GM12878 (cell line): ENCODE measurements at regions of chr11 and their contacts with region 1.

Region 1: GRCh38 chr11:57530596-57531507 is at the start of gene TIMM10:
- DNase-seq: peak; percentile 95
- ATAC-seq: peak; percentile 97
- H3K4me3 ChIP-seq: peak within 1 kb of the TSS; percentile 85
- H3K27ac ChIP-seq: peak within 1 kb of the TSS; percentile 88
- H3K4me1 ChIP-seq: peaks cover 16% of the 10 kb centered on the region
- H3K27me3 ChIP-seq: no peaks in the 10 kb centered on the region
- CTCF ChIP-seq: no peak
- EP300 ChIP-seq: peak; percentile 21 to 35; a peak in 2 of 4 replicates
- POLR2A ChIP-seq: peak; percentile 79
- RAD21 ChIP-seq: no peak
- polyA plus RNA-seq, gene TIMM10: 770 to 898 TPM

Region 2: DNA sequence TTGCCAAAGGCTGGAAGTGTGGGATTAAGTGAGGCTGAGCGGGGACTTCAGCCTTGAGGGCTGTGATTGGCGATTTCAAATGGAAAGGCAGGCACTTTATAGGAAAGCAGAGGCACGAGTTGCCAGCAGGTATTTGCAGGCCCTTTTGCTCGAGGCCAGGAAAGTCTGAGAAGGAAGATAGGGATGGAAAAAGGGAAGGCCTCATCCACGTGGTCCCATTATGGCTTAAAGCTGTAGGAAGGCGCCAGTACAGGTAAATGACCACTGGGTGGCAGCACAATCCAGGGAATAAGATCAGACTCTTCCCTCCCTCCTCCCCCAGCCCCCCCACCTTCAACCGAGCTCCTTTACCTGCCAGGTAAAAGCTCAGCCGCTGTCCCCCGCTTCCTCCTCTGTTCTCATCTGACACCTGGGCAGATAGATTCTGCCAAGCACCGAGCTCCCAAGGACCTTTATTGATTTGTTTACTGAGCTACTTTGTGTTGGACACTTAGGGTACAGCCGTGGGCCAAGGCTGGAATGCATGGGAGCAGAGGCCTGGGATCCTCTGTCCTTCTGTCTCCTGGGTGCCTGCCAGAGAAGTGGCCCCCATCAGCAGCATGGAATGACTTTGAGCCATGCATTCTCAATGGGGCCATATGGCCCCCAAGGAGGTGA is 185.2 kb before region 1 on chr11:
- CTCF ChIA-PET with region 1: interaction called, 22 read pairs
- POLR2A ChIA-PET with region 1: no interaction called
- RAD21 ChIA-PET with region 1: interaction called, 9 read pairs
- SMC1A ChIA-PET with region 1: interaction called, 9 read pairs
- in situ Hi-C with region 1: loop called (anchors 5 kb)
- intact Hi-C with region 1: loop called (anchors 1 kb)
- DNase-seq: no peak
- ATAC-seq: peak; percentile 83
- H3K4me3 ChIP-seq: no peak overlapping the region
- H3K27ac ChIP-seq: no peak overlapping the region
- H3K4me1 ChIP-seq: no peaks in the 10 kb centered on the region; the same call in 1 of the 2 replicates
- H3K27me3 ChIP-seq: peaks cover 0 to 4% of the 10 kb centered on the region in 2 experiments; a peak in 1 of 4 replicates
- CTCF ChIP-seq: peak; percentile 66 to 77 (median 75); a peak in 5 of 6 replicates
- EP300 ChIP-seq: no peak
- POLR2A ChIP-seq: no peak
- RAD21 ChIP-seq: peak; percentile 76

Region 3: GRCh38 chr11:57474017-57474802 is 56.6 kb before region 1 on chr11:
- CTCF ChIA-PET with region 1: interaction called, 112 read pairs
- POLR2A ChIA-PET with region 1: no interaction called
- RAD21 ChIA-PET with region 1: interaction called, 5 read pairs
- SMC1A ChIA-PET with region 1: no interaction called
- in situ Hi-C with region 1: no loop called
- intact Hi-C with region 1: no loop called
- DNase-seq: peak; percentile 53
- ATAC-seq: peak; percentile 54
- H3K4me3 ChIP-seq: no peak overlapping the region
- H3K27ac ChIP-seq: 0 out of 2 replicates have a peak overlapping the region, but pooled peaks have one; percentile 35
- H3K4me1 ChIP-seq: peaks cover 24% of the 10 kb centered on the region
- H3K27me3 ChIP-seq: no peaks in the 10 kb centered on the region
- CTCF ChIP-seq: no peak
- EP300 ChIP-seq: no peak
- POLR2A ChIP-seq: no peak
- RAD21 ChIP-seq: no peak

Region 4: GRCh38 chr11:57508341-57509170 is 22.3 kb before region 1 on chr11:
- CTCF ChIA-PET with region 1: interaction called, 129 read pairs
- POLR2A ChIA-PET with region 1: no interaction called
- RAD21 ChIA-PET with region 1: interaction called, 7 read pairs
- SMC1A ChIA-PET with region 1: interaction called, 6 read pairs
- in situ Hi-C with region 1: no loop called
- intact Hi-C with region 1: no loop called
- DNase-seq: no peak
- ATAC-seq: no peak
- H3K4me3 ChIP-seq: no peak overlapping the region
- H3K27ac ChIP-seq: no peak overlapping the region
- H3K4me1 ChIP-seq: no peaks in the 10 kb centered on the region
- H3K27me3 ChIP-seq: no peaks in the 10 kb centered on the region
- CTCF ChIP-seq: no peak
- EP300 ChIP-seq: no peak
- POLR2A ChIP-seq: no peak
- RAD21 ChIP-seq: no peak

Region 5: DNA sequence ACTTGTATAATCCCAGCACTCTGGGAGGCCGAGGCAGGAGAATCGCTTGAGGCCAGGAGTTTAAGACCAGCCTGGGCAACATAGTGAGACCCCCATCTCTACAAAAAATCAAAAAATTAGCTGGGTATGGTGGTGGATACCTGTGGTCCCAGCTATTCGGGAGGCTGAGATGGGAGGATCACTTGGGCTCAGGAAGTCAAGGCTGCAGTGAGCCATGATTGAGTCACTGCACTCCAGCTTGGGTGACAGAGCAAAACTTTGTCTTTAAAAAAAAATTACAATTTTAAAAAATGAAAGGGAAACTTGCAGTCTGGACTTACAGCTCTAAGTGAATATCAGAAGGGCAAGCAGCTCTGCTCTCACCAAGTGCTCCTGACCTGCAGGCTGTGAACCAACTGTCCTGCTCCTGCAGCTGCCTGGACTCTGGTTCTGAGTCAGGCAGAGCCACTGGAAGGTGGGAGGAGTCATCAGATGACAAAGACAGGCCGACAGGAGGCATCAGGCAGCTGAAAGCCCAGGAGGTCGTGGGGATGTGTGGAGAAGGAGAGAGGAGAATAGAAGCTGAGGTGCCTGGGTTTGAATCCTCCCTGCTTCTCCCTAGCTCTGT is 16.1 kb after region 1 on chr11:
- CTCF ChIA-PET with region 1: interaction called, 10 read pairs
- POLR2A ChIA-PET with region 1: interaction called, 3 read pairs
- RAD21 ChIA-PET with region 1: no interaction called
- SMC1A ChIA-PET with region 1: interaction called, 3 read pairs
- in situ Hi-C with region 1: no loop called
- intact Hi-C with region 1: no loop called
- DNase-seq: no peak
- ATAC-seq: peak; percentile 82
- H3K4me3 ChIP-seq: no peak overlapping the region
- H3K27ac ChIP-seq: peak overlapping the region; percentile 48
- H3K4me1 ChIP-seq: peaks cover 15% of the 10 kb centered on the region
- H3K27me3 ChIP-seq: no peaks in the 10 kb centered on the region
- CTCF ChIP-seq: no peak
- EP300 ChIP-seq: 0 out of 4 replicates have a peak, but pooled peaks of 1 of the 2 experiments have one; percentile 15
- POLR2A ChIP-seq: no peak
- RAD21 ChIP-seq: no peak

Region 6: GRCh38 chr11:57644748-57645688 is 114.2 kb after region 1 on chr11:
- CTCF ChIA-PET with region 1: interaction called, 103 read pairs
- POLR2A ChIA-PET with region 1: interaction called, 5 read pairs
- RAD21 ChIA-PET with region 1: interaction called, 5 read pairs
- SMC1A ChIA-PET with region 1: interaction called, 7 read pairs
- in situ Hi-C with region 1: no loop called
- intact Hi-C with region 1: no loop called
- DNase-seq: no peak
- ATAC-seq: peak; percentile 85
- H3K4me3 ChIP-seq: no peak overlapping the region
- H3K27ac ChIP-seq: no peak overlapping the region
- H3K4me1 ChIP-seq: peaks cover 12% of the 10 kb centered on the region
- H3K27me3 ChIP-seq: peaks cover 10 to 17% of the 10 kb centered on the region in 2 experiments
- CTCF ChIP-seq: peak; percentile 73 to 85 (median 85)
- EP300 ChIP-seq: no peak
- POLR2A ChIP-seq: no peak
- RAD21 ChIP-seq: peak; percentile 93